ENCODE measurements at regions of chr14 and their contacts with region 1.

Region 1: DNA sequence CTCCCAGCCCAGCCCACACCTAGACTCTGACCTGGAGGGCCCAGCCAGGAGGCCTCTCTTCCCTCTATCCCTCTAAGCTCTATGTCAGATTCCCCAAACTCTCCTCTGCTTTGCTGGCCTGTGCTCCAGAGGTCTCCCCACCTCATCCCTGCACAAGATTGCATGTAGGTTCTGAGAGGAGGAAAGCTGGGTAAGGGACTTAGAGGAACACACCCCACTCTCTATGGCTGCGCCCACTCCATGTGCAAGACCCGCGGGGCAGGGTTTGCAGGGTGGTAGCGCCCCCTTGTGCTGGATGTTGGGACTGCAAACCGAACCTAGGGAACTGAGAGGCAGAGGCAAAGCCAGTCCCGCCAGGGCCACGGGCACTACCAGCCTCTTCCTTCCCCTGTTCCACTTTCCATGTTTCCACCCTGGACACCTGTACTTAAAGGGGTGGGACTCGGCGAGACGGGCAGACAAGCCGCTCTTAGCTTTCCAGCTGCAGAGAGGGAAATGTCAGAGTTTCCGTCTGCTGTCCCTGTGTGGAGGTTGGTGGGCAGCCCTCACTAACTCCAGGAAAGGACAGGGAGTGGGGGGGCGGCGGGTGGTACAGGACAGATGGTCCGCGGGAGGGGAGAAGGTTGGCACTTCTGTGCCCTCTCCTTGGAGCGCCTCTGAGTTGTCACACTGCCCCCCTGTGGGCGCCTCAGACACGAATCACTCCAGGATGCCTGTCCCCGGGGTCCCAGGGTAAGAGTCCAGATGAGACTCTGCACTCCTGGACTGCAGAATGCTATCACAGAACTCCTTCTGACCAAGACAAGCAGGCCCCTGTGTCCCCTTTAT is 16.8 kb downstream of the MMP14 start:
- DNase-seq: peak; percentile 94
- ATAC-seq: peak; percentile 82
- H3K4me3 Mint-ChIP-seq: peak overlapping the region; percentile 69
- H3K27ac Mint-ChIP-seq: peak overlapping the region; percentile 81
- H3K4me1 Mint-ChIP-seq: peaks cover 26% of the 10 kb centered on the region
- H3K27me3 Mint-ChIP-seq: peaks cover 7% of the 10 kb centered on the region

Region 2: GRCh38 chr14:22589096-22589839 is 263.9 kb before region 1 on chr14 and contains the start of gene DAD1:
- CTCF ChIA-PET with region 1: interaction called, 4 read pairs
- POLR2A ChIA-PET with region 1: interaction called, 3 read pairs
- intact Hi-C with region 1: loop called (anchors 5 kb)
- DNase-seq: peak; percentile 100
- ATAC-seq: peak; percentile 84
- H3K4me3 Mint-ChIP-seq: peak within 1 kb of the TSS; percentile 93
- H3K27ac Mint-ChIP-seq: peak within 1 kb of the TSS; percentile 97
- H3K4me1 Mint-ChIP-seq: peaks cover 72% of the 10 kb centered on the region
- H3K27me3 Mint-ChIP-seq: peaks cover 1% of the 10 kb centered on the region
- total RNA-seq, gene DAD1: 265 to 302 TPM

Region 3: GRCh38 chr14:22713631-22713950 is 139.6 kb before region 1 on chr14:
- CTCF ChIA-PET with region 1: interaction called, 3 read pairs
- POLR2A ChIA-PET with region 1: no interaction called
- intact Hi-C with region 1: loop called in 1 of 2 experiments (anchors 2 kb)
- DNase-seq: no peak
- ATAC-seq: no peak
- H3K4me3 Mint-ChIP-seq: peak overlapping the region; percentile 77
- H3K27ac Mint-ChIP-seq: peak overlapping the region; percentile 86
- H3K4me1 Mint-ChIP-seq: peaks cover 8% of the 10 kb centered on the region
- H3K27me3 Mint-ChIP-seq: peaks cover 14% of the 10 kb centered on the region

Region 4: DNA sequence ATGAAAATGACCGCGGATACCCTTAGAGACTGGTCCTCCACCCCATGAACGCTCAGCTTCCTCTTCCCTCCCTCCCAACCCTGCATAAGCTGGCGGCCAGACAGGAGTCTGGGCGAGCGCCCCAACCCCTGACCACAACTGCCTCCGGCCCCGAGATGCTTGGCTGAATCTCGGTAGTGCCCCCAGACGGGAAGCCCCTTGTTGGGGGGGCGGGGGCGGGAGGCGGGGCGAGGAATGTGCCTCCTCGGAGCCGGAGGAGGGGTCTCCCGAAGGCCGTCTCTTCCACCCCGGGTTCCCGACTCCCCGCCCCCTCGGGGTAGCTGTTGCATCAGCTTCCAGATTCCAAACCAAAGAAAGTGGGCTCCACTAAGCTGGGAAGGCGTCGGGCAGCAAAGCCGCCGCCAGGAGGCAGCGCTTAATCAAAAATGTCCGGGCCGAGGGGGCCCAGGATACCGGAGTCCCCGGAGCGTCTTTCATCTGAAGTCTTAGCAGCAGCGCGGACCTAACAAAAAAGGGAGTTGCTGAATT is 30.5 kb before region 1 on chr14:
- CTCF ChIA-PET with region 1: interaction called, 148 read pairs
- POLR2A ChIA-PET with region 1: no interaction called
- intact Hi-C with region 1: loop called (anchors 1 kb)
- DNase-seq: peak; percentile 80
- ATAC-seq: peak; percentile 75
- H3K4me3 Mint-ChIP-seq: peak overlapping the region; percentile 55
- H3K27ac Mint-ChIP-seq: peak overlapping the region; percentile 25
- H3K4me1 Mint-ChIP-seq: peaks cover 27% of the 10 kb centered on the region
- H3K27me3 Mint-ChIP-seq: peaks cover 5% of the 10 kb centered on the region

Region 5: DNA sequence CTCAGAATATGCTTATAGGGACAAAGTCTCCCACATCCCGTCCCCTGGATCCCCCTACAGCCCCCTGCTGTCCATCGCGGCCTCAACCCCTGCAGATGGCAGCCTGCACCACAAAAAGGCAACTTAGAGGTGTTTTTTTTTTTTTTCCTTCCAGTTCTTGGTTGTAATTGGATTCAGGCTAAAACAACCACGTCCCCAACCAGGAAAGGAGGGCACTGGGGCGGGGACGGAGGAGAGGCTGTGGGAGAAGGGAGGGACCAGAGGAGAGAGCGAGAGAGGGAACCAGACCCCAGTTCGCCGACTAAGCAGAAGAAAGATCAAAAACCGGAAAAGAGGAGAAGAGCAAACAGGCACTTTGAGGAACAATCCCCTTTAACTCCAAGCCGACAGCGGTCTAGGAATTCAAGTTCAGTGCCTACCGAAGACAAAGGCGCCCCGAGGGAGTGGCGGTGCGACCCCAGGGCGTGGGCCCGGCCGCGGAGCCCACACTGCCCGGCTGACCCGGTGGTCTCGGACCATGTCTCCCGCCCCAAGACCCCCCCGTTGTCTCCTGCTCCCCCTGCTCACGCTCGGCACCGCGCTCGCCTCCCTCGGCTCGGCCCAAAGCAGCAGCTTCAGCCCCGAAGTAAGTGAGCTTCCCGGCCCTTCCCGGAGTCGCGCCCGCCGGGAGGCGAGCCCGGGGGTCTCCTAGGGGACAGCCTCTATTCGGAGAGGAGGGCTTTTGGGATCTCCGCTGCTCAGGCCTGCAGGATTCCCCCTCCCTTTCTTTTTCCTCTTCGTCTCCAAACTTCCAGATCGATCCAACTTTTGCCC is 16.6 kb before region 1 on chr14 and contains the start of gene MMP14:
- CTCF ChIA-PET with region 1: interaction called, 148 read pairs
- POLR2A ChIA-PET with region 1: interaction called, 3 read pairs
- intact Hi-C with region 1: no loop called
- DNase-seq: no peak
- ATAC-seq: no peak
- H3K4me3 Mint-ChIP-seq: peak within 1 kb of the TSS; percentile 63
- H3K27ac Mint-ChIP-seq: peak within 1 kb of the TSS; percentile 17
- H3K4me1 Mint-ChIP-seq: peaks cover 15% of the 10 kb centered on the region
- H3K27me3 Mint-ChIP-seq: peaks cover 13% of the 10 kb centered on the region
- total RNA-seq, gene MMP14: 2.0 to 2.1 TPM

Region 6: DNA sequence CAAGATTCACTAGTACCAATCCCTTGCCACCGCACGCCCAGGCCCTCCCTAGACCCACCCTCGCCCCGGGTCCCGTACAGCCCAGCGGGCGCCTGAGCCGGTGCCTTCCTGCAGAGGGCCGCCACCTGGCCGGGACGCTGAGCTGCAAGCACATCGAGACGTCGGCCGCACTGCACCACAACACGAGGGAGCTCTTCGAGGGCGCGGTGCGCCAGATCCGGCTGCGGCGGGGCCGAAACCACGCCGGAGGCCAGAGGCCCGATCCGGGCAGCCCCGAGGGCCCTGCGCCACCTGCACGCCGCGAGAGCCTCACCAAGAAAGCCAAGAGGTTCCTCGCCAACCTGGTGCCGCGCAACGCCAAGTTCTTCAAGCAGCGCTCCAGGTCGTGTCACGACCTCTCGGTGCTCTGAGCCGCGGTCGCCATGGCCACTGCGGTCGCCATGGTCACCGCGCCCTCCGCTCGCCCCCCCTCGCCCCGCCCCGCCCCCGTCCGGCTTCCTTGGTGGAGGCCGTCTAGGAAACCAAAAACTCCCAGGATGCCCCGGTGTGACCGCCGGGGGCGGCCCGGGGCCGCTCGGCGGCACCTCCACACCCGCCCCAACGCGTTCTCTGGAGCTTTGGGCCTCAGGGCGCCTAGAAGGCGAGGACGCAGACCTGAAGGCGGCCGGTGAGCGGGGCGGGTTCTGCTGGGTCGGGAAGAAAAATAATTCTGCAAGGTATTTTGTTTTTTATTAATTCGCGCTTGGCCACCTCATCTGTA is 33.5 kb after region 1 on chr14:
- CTCF ChIA-PET with region 1: interaction called, 29 read pairs
- POLR2A ChIA-PET with region 1: no interaction called
- intact Hi-C with region 1: no loop called
- DNase-seq: peak; percentile 85
- ATAC-seq: peak; percentile 63
- H3K4me3 Mint-ChIP-seq: peak overlapping the region; percentile 70
- H3K27ac Mint-ChIP-seq: peak overlapping the region; percentile 83
- H3K4me1 Mint-ChIP-seq: peaks cover 50% of the 10 kb centered on the region
- H3K27me3 Mint-ChIP-seq: peaks cover 2% of the 10 kb centered on the region

Measured in activated CD4-positive, alpha-beta T cell treated with anti-CD3 and anti-CD28 coated beads for 36 hours (primary cell).